Activated CD4-positive, alpha-beta memory T cell treated with anti-CD3 and anti-CD28 coated beads, Interleukin-2, amount 10 ng/mL, durations not matched to agents 7 days and 5 days (primary cell): ENCODE measurements at regions of chr6 and their contacts with region 1.

Region 1: GRCh38 chr6:159062564-159062945 is 17.8 kb upstream of the TAGAP start:
- DNase-seq: peak; percentile 76
- H3K4me3 Mint-ChIP-seq: peak overlapping the region; percentile 26
- H3K27ac Mint-ChIP-seq: peak overlapping the region; percentile 95
- H3K4me1 Mint-ChIP-seq: peaks cover 80% of the 10 kb centered on the region
- H3K27me3 Mint-ChIP-seq: peaks cover 4% of the 10 kb centered on the region

Region 2: DNA sequence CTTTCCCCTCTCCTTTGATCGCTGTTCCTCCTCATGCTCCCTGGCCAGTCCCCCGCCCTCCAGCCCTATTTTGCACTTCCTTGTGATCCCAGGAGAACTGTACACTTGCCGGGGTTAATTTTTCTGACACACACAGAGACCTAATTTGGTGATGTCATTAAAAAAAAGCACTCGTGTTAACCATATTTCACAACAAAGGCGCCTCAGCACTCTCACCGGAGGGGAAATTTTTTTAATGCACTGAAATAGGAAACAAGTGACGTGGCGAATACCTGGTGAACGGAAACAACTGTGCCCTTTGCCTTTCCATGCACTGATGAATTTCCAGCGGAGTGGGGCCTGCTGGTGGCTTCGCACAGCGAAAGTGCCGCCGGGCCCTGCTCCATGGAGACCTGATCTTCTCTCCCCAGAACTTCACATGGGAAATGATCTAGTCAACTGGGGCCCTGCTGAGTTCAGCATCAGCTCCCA is 36.1 kb after region 1 on chr6:
- CTCF ChIA-PET with region 1: interaction called, 23 read pairs
- POLR2A ChIA-PET with region 1: interaction called, 29 read pairs
- DNase-seq: peak; percentile 61
- H3K4me3 Mint-ChIP-seq: peak overlapping the region; percentile 49
- H3K27ac Mint-ChIP-seq: peak overlapping the region; percentile 73
- H3K4me1 Mint-ChIP-seq: peaks cover 56% of the 10 kb centered on the region
- H3K27me3 Mint-ChIP-seq: no peaks in the 10 kb centered on the region